ENCODE measurements at regions of chr11 and their contacts with region 1.

Region 1: DNA sequence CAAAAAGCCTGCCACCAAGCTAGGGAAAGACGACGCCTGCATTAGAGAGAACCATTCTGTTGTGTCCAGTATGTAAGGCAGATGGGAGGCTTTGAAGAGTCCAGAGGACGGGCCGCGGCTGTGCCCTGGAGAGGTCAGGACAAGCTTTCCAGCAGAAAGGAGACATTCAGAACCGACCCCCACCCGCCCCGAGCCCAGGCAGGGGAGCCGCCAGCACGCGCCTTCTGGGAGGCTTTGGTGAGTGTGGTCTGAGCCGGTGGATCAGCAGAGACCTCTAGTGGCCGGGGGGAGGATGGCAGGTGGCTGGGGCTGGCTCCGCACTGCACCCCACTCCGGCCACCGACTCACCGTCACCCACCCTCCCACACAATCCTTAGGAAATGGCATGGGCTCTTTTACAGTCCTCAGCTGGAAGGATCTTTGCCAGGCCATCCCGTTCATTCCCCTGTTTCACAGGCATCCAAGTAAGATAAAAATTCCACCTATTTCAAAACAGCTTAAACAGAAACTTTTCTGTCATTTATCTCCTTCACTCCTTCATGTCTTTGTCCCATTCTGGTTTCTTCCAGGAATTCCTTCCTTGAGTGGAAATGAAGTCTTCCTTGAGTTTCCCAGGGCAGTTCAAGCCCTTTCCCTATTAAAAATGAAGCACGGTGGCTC is 91.2 kb downstream of the FEZ1 start:
- DNase-seq: peak; percentile 47
- ATAC-seq: peak; percentile 96
- H3K4me3 ChIP-seq: no peak overlapping the region
- H3K27ac ChIP-seq: no peak overlapping the region
- H3K4me1 ChIP-seq: peaks cover 6% of the 10 kb centered on the region; the same call in 1 of the 2 replicates
- H3K27me3 ChIP-seq: peaks cover 16% of the 10 kb centered on the region
- CTCF ChIP-seq: peak; percentile 95
- POLR2A ChIP-seq: peak; percentile 43; the same call in 1 of the 2 replicates
- RAD21 ChIP-seq: peak; percentile 92

Region 2: DNA sequence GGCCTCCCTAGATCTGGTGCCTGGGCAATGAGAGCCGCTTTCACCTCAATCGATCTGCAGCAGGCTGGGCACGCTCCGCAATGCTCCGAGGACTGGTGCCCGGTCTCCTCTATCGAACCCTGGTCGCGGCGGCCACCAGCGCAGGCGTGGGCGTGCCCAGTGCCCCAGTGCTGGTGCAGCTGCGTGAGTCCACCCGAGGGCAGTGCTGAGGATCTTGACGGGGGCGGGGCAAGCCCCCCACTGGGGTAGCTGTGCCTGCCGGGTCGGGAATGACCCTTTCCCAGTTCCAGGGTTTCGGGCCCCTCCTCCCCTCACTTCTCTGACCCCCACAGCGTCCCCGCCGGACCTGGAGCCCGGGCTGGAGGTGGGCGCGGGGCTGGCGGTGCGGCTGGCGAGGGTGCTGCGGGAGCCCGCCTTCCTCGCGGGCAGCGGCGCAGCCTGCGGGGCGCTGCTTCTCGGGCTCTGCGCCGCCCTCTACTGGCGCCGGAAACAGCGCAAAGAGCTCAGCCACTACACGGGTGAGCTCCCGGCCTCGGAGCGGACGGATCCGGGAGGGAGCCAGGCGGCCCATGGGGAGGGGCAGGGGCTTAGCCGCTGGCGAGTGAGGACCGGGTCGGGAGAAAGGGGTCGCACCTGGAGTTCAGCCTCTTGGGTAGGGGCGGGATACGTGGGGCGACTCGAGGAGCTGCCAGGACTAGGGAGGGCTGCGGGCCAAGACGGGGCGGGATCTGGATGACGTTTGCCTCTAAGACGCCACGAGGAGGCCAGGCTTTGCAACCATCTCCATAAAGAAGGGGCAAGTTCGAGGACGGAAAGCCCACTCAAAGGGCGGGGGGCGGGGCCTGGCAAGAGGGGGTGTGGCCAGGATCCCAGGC is 528.7 kb before region 1 on chr11:
- CTCF ChIA-PET with region 1: no interaction called
- POLR2A ChIA-PET with region 1: no interaction called
- dilution Hi-C with region 1: no loop called
- in situ Hi-C with region 1: no loop called
- intact Hi-C with region 1: loop called (anchors 10 kb)
- DNase-seq: peak; percentile 96
- ATAC-seq: peak; percentile 96
- H3K4me3 ChIP-seq: peak overlapping the region; percentile 58
- H3K27ac ChIP-seq: peak overlapping the region; percentile 83
- H3K4me1 ChIP-seq: peaks cover 3% of the 10 kb centered on the region
- H3K27me3 ChIP-seq: peaks cover 23% of the 10 kb centered on the region
- CTCF ChIP-seq: peak; percentile 80
- POLR2A ChIP-seq: peak; percentile 85
- RAD21 ChIP-seq: peak; percentile 57

Region 3: DNA sequence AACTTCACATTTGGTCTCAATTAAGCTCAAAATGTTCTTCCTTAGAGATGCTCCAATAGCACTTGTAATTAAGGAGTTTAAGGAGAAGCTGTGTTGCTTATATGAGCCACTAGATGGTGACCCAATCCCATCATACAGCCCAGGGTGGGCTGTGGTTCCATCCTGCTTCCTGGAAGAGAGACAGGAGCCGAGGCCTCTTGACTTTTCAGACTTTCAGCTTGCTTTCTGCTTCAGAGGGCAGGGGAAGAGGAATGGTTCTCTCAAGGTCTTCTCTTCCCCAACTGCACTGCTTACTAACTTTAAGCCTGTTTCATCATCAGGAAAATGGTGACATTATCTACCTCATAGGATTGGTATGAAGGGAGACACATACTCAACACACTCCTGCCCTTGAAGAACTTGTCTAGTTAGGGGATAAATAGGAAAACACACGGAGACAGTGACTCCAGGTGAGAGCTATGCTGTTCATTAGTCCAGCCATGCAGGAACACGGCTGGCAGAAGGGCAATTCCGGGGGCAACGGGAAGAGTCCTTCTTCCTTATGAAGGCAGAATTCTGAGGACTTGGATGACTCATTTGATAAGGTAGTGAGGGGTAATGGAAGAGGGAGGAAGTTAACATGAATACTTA is 313.5 kb before region 1 on chr11:
- CTCF ChIA-PET with region 1: interaction called, 14 read pairs
- POLR2A ChIA-PET with region 1: no interaction called
- dilution Hi-C with region 1: no loop called
- in situ Hi-C with region 1: loop called (anchors 5 kb)
- intact Hi-C with region 1: loop called (anchors 1 kb)
- DNase-seq: peak; percentile 77
- ATAC-seq: peak; percentile 94
- H3K4me3 ChIP-seq: no peak overlapping the region
- H3K27ac ChIP-seq: peak overlapping the region; percentile 15; the same call in 1 of the 2 replicates
- H3K4me1 ChIP-seq: peaks cover 10% of the 10 kb centered on the region
- H3K27me3 ChIP-seq: no peaks in the 10 kb centered on the region
- CTCF ChIP-seq: peak; percentile 77
- POLR2A ChIP-seq: no peak
- RAD21 ChIP-seq: peak; percentile 85

Region 4: DNA sequence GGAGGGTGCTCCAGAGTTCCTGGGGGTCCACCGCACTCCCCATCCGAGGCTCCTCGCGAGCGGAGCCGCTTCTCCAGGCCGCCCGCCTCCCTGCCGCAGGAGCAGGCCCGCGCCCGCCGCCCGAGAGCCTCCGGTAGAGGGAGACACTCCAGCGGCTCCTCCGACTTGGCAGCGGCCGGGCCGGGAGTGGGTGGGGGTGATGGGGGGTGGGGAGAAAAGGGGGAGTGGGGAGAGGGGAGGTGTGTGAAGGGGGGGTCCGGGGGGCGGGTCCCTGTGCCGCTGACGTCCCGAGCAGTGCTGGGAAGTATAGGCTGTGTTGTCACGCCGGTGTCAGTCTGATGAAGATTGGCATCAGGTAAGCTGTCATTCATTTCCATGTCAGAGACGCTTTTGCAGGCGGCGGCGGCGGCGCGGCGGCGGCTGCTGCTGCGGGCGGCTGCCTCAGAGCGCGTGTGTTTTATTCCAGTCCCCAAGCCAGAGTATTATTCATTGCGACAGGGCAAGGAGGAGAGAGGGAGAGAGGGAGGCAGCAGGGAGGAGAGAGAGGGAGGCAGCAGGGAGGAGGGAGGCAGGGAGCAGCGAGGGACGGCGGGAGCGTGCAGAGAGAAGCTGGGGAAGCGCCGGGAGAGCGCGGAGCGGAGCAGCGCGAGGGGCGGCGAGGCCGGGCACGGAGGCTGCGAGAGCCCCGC is 240.3 kb before region 1 on chr11 and contains the start of gene PKNOX2:
- CTCF ChIA-PET with region 1: interaction called, 4 read pairs
- POLR2A ChIA-PET with region 1: no interaction called
- dilution Hi-C with region 1: no loop called
- in situ Hi-C with region 1: loop called (anchors 10 kb)
- intact Hi-C with region 1: loop called (anchors 1 kb)
- DNase-seq: peak; percentile 67
- ATAC-seq: peak; percentile 69
- H3K4me3 ChIP-seq: peak within 1 kb of the TSS; percentile 65
- H3K27ac ChIP-seq: peak within 1 kb of the TSS; percentile 80
- H3K4me1 ChIP-seq: peaks cover 5% of the 10 kb centered on the region
- H3K27me3 ChIP-seq: peaks cover 2% of the 10 kb centered on the region; the same call in 1 of the 2 replicates
- CTCF ChIP-seq: peak; percentile 66
- POLR2A ChIP-seq: no peak
- RAD21 ChIP-seq: peak; percentile 60
- total RNA-seq, gene PKNOX2: 0.72 and 1.1 TPM in 2 replicates

Region 5: GRCh38 chr11:125345421-125346178 is 59.3 kb before region 1 on chr11:
- CTCF ChIA-PET with region 1: interaction called, 8 read pairs
- POLR2A ChIA-PET with region 1: no interaction called
- dilution Hi-C with region 1: no loop called
- in situ Hi-C with region 1: no loop called
- intact Hi-C with region 1: loop called (anchors 1 kb)
- DNase-seq: peak; percentile 67
- ATAC-seq: peak; percentile 82
- H3K4me3 ChIP-seq: no peak overlapping the region
- H3K27ac ChIP-seq: no peak overlapping the region
- H3K4me1 ChIP-seq: peaks cover 2% of the 10 kb centered on the region; the same call in 1 of the 2 replicates
- H3K27me3 ChIP-seq: no peaks in the 10 kb centered on the region
- CTCF ChIP-seq: peak; percentile 89
- POLR2A ChIP-seq: no peak
- RAD21 ChIP-seq: peak; percentile 78

Region 6: GRCh38 chr11:126140932-126141291 is 736.0 kb after region 1 on chr11:
- CTCF ChIA-PET with region 1: no interaction called
- POLR2A ChIA-PET with region 1: no interaction called
- dilution Hi-C with region 1: no loop called
- in situ Hi-C with region 1: no loop called
- intact Hi-C with region 1: no loop called
- DNase-seq: peak; percentile 70
- ATAC-seq: peak; percentile 56
- H3K4me3 ChIP-seq: no peak overlapping the region
- H3K27ac ChIP-seq: no peak overlapping the region
- H3K4me1 ChIP-seq: peaks cover 18% of the 10 kb centered on the region; the same call in 1 of the 2 replicates
- H3K27me3 ChIP-seq: peaks cover 65% of the 10 kb centered on the region
- CTCF ChIP-seq: no peak
- POLR2A ChIP-seq: no peak
- RAD21 ChIP-seq: no peak